ENCODE measurements at regions of chr11 and their contacts with region 1.

Region 1: DNA sequence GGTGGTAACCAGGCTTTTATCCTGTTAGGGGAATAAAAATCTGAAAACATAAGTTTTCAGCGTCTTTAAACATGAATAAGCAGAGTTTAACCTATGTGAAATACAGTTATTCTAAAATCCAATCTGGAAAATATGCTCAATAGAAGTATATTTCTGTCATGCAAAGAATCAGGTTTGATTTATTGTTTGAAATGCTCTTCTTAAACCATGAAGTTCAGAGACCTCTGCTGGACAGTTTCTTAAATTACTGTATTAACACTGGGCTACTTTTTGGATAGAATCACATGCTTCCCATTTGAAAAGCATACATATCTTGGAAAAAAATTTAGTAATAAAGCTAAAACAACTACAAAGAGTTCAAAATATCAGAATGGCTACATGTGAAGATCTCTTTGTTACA is 25.4 kb downstream of the APIP start:
- H3K4me3 Mint-ChIP-seq: no peak overlapping the region
- H3K27ac Mint-ChIP-seq: no peak overlapping the region
- H3K4me1 Mint-ChIP-seq: no peaks in the 10 kb centered on the region
- H3K27me3 Mint-ChIP-seq: no peaks in the 10 kb centered on the region

Region 2: GRCh38 chr11:34512840-34513681 is 377.8 kb before region 1 on chr11:
- intact Hi-C with region 1: loop called (anchors 5 kb)
- H3K4me3 Mint-ChIP-seq: no peak overlapping the region
- H3K27ac Mint-ChIP-seq: no peak overlapping the region
- H3K4me1 Mint-ChIP-seq: peaks cover 67% of the 10 kb centered on the region
- H3K27me3 Mint-ChIP-seq: peaks cover 2% of the 10 kb centered on the region

Region 3: GRCh38 chr11:34565417-34566207 is 325.2 kb before region 1 on chr11:
- intact Hi-C with region 1: loop called (anchors 5 kb)
- H3K4me3 Mint-ChIP-seq: no peak overlapping the region
- H3K27ac Mint-ChIP-seq: no peak overlapping the region
- H3K4me1 Mint-ChIP-seq: peaks cover 14% of the 10 kb centered on the region
- H3K27me3 Mint-ChIP-seq: peaks cover 44% of the 10 kb centered on the region

Measured in dendritic cell treated with granulocyte-macrophage colony-stimulating factor and Interleukin-4, amounts not matched to agents 40 ng/mL and 50 ng/mL, for 4 days (primary cell).